CD4-positive, alpha-beta memory T cell (primary cell): ENCODE measurements at regions of chr10 and their contacts with region 1.

Region 1: DNA sequence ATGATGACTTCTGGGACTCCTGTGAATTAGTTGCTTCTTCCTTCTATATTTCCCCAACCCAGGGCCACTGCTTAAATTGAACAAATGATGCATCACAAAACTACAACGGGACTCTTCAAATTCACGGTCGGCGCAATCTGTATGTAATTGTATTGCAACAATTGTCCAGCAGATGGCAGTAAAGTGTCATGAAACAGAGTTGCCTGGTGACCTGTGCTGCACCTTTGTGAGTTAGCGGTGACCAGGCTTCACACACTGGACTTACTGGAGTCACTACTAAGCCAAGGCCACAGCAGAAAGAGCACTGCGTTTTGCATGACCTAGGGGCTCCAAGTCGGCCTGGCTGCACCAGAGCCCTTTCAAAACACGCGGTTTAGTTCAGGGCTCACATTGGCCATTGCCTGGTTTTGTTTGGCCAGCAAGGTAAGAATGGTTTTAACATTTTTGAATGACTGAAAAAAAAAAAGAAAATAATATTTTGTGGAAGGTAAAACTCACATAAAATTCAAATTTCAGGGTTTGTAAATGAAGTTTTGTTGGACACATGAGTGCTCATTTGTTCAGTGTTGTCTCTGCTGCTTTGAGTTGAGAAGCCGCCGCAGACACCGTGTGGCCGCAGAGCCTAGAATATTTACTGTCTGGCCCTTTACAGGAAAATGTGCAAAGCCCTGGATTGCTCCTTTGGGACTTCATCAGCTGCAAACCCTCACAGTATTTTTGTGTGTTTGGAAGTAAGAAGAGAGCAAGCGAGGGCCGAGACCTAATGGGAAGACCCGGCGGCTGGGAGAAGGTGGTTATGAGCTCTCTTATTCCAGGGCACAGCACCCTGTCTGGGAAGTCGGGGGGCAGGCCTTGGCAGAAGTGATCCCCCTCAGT is 23.2 kb upstream of the ZNF32 start:
- DNase-seq: peak in 4 of 5 donors; percentile 49 to 65 (median 54)
- H3K4me3 ChIP-seq: no peak overlapping the region
- H3K4me3 Mint-ChIP-seq: no peak overlapping the region
- H3K27ac ChIP-seq: no peak overlapping the region
- H3K27ac Mint-ChIP-seq: no peak overlapping the region
- H3K4me1 ChIP-seq: no peaks in the 10 kb centered on the region
- H3K4me1 Mint-ChIP-seq: peaks cover 0 to 7% (median 2%) of the 10 kb centered on the region in 4 donors
- H3K27me3 ChIP-seq: peaks cover 10% of the 10 kb centered on the region
- H3K27me3 Mint-ChIP-seq: peaks cover 27 to 32% of the 10 kb centered on the region in 2 donors

Region 2: DNA sequence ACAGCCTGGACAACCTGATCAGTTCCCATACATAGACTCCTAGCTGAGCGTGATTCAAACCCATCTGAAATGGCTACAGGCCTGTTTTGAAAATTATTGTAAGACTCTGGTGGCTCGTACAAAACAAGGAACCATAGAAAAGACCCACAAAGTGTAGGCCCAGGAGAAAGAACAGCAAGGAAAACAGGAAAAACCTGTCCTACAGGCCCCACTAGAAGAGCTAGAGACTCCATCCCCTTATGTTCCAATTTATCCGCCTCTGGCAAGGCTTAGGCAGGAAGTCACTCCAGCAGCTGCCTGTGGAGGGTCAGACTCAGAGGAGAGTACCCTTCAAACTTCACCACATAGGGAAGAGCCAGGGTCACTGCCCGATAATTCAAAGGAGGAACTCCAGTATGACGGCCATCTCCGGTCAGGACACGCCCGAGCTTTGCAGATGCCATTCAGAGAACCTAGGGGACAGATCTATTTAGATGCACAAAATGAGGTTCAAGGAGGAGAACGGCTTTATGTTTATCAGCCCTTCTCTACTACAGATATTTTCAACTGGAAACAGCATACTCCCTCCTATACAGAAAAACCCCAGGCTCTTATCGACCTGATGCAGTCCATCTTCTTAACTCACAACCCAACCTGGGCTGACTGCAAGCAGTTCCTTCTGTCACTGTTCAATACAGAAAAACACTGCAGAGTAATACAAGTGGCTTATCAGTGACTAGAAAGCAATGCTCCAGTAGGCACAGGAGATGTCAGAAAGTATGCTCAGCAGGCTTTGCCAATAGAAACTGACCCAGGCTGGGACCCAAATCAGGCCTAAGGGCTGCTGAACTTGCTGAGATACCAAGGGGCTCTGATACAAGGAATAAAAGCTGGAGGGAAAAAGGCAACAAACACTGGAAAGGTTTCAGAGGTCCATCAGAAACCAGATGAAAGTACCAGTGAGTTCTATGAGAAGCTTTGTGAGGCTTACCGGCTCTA is 1024.9 kb before region 1 on chr10:
- CTCF ChIA-PET with region 1: no interaction called
- POLR2A ChIA-PET with region 1: no interaction called
- intact Hi-C with region 1: no loop called
- DNase-seq: no peak
- H3K4me3 ChIP-seq: no peak overlapping the region
- H3K4me3 Mint-ChIP-seq: no peak overlapping the region
- H3K27ac ChIP-seq: no peak overlapping the region
- H3K27ac Mint-ChIP-seq: no peak overlapping the region
- H3K4me1 ChIP-seq: no peaks in the 10 kb centered on the region
- H3K4me1 Mint-ChIP-seq: peaks cover 0 to 7% (median 4%) of the 10 kb centered on the region in 4 donors
- H3K27me3 ChIP-seq: no peaks in the 10 kb centered on the region
- H3K27me3 Mint-ChIP-seq: peaks cover 0 to 1% of the 10 kb centered on the region in 2 donors

Region 3: GRCh38 chr10:43939939-43940820 is 268.3 kb after region 1 on chr10:
- CTCF ChIA-PET with region 1: no interaction called
- POLR2A ChIA-PET with region 1: no interaction called
- intact Hi-C with region 1: no loop called
- DNase-seq: no peak
- H3K4me3 ChIP-seq: no peak overlapping the region
- H3K4me3 Mint-ChIP-seq: peak overlapping the region in 1 of 8 donors; percentile 4
- H3K27ac ChIP-seq: no peak overlapping the region
- H3K27ac Mint-ChIP-seq: no peak overlapping the region
- H3K4me1 ChIP-seq: no peaks in the 10 kb centered on the region
- H3K4me1 Mint-ChIP-seq: peaks cover 12 to 19% (median 17%) of the 10 kb centered on the region in 4 donors
- H3K27me3 ChIP-seq: no peaks in the 10 kb centered on the region
- H3K27me3 Mint-ChIP-seq: peaks cover 3 to 8% of the 10 kb centered on the region in 2 donors

Region 4: GRCh38 chr10:44974628-44975431 is 1302.9 kb after region 1 on chr10:
- CTCF ChIA-PET with region 1: no interaction called
- POLR2A ChIA-PET with region 1: no interaction called
- intact Hi-C with region 1: loop called (anchors 1 kb)
- DNase-seq: peak in 4 of 5 donors; percentile 60 to 75 (median 65)
- H3K4me3 ChIP-seq: peak overlapping the region; percentile 60 to 61
- H3K4me3 Mint-ChIP-seq: peak overlapping the region; percentile 61 to 80 (median 74)
- H3K27ac ChIP-seq: no peak overlapping the region
- H3K27ac Mint-ChIP-seq: peak overlapping the region in 4 of 7 donors; percentile 16 to 77 (median 33)
- H3K4me1 ChIP-seq: peaks cover 17% of the 10 kb centered on the region
- H3K4me1 Mint-ChIP-seq: peaks cover 0 to 9% (median 3%) of the 10 kb centered on the region in 4 donors
- H3K27me3 ChIP-seq: no peaks in the 10 kb centered on the region
- H3K27me3 Mint-ChIP-seq: no peaks in the 10 kb centered on the region